GM12878 (cell line): ENCODE measurements at regions of chr10 and their contacts with region 1.

Region 1: GRCh38 chr10:27241652-27242472 is 1.3 kb upstream of the ACBD5 start:
- DNase-seq: peak; percentile 80
- ATAC-seq: peak; percentile 74
- H3K4me3 ChIP-seq: peak overlapping the region; percentile 93
- H3K27ac ChIP-seq: peak overlapping the region; percentile 95
- H3K4me1 ChIP-seq: peaks cover 4% of the 10 kb centered on the region; the same call in 1 of the 2 replicates
- H3K27me3 ChIP-seq: no peaks in the 10 kb centered on the region
- CTCF ChIP-seq: peak; percentile 17 to 40 (median 23); a peak in 5 of 6 replicates
- EP300 ChIP-seq: no peak
- POLR2A ChIP-seq: peak; percentile 90
- RAD21 ChIP-seq: no peak

Region 2: GRCh38 chr10:27252267-27253000 is 10.6 kb after region 1 on chr10:
- CTCF ChIA-PET with region 1: interaction called, 17 read pairs
- POLR2A ChIA-PET with region 1: interaction called, 5 read pairs
- RAD21 ChIA-PET with region 1: no interaction called
- SMC1A ChIA-PET with region 1: interaction called, 12 read pairs
- in situ Hi-C with region 1: no loop called
- intact Hi-C with region 1: no loop called
- DNase-seq: peak; percentile 27
- ATAC-seq: peak; percentile 100
- H3K4me3 ChIP-seq: peak overlapping the region; percentile 69
- H3K27ac ChIP-seq: peak overlapping the region; percentile 63
- H3K4me1 ChIP-seq: peaks cover 3% of the 10 kb centered on the region; the same call in 1 of the 2 replicates
- H3K27me3 ChIP-seq: no peaks in the 10 kb centered on the region
- CTCF ChIP-seq: peak; percentile 19 to 74 (median 46); a peak in 4 of 6 replicates
- EP300 ChIP-seq: no peak
- POLR2A ChIP-seq: peak; percentile 98
- RAD21 ChIP-seq: 0 out of 2 replicates have a peak, but pooled peaks have one; percentile 16

Region 3: GRCh38 chr10:27345455-27345920 is 103.6 kb after region 1 on chr10:
- CTCF ChIA-PET with region 1: no interaction called
- POLR2A ChIA-PET with region 1: interaction called, 3 read pairs
- RAD21 ChIA-PET with region 1: no interaction called
- SMC1A ChIA-PET with region 1: no interaction called
- in situ Hi-C with region 1: loop called (anchors 5 kb)
- intact Hi-C with region 1: loop called (anchors 5 kb)
- DNase-seq: peak; percentile 23
- ATAC-seq: peak; percentile 73
- H3K4me3 ChIP-seq: peak overlapping the region; percentile 43; the same call in 1 of the 2 replicates
- H3K27ac ChIP-seq: peak overlapping the region; percentile 14
- H3K4me1 ChIP-seq: peaks cover 9% of the 10 kb centered on the region
- H3K27me3 ChIP-seq: no peaks in the 10 kb centered on the region
- CTCF ChIP-seq: no peak
- EP300 ChIP-seq: no peak; a peak in 1 of 4 replicates
- POLR2A ChIP-seq: no peak
- RAD21 ChIP-seq: no peak

Region 4: DNA sequence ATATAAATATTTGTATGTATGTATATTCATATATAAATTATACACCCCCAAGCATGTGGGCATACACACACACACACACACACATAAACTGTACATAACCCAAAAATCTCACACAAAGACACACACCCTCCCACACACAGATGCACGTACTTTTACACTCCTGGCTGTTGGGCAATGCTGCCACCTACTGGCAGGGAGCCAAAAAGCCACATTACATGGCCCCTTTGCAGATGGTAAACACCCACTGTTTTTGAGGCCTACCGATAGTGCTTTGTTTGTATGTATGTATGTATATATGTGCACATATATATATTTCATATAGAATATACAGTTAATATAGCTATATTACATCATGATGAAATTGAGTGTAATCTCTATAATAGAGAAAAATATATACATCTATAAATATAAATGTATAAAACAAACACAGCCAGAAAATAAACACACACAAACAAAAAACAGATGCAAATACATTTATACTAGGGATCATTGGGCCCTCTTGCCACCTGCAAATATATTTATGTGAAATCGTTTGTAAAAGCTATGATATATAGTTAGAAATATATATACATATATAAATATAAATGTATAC is 118.8 kb after region 1 on chr10:
- CTCF ChIA-PET with region 1: interaction called, 4 read pairs
- POLR2A ChIA-PET with region 1: no interaction called
- RAD21 ChIA-PET with region 1: interaction called, 3 read pairs
- SMC1A ChIA-PET with region 1: interaction called, 3 read pairs
- in situ Hi-C with region 1: no loop called
- intact Hi-C with region 1: loop called (anchors 5 kb)
- DNase-seq: peak; percentile 62
- ATAC-seq: peak; percentile 98
- H3K4me3 ChIP-seq: no peak overlapping the region
- H3K27ac ChIP-seq: no peak overlapping the region
- H3K4me1 ChIP-seq: 0 out of 2 replicates have a peak, but pooled peaks cover 5% of the 10 kb centered on the region
- H3K27me3 ChIP-seq: no peaks in the 10 kb centered on the region
- CTCF ChIP-seq: peak; percentile 90 to 98 (median 95); a peak in 5 of 6 replicates
- EP300 ChIP-seq: no peak
- POLR2A ChIP-seq: no peak
- RAD21 ChIP-seq: peak; percentile 100

Region 5: DNA sequence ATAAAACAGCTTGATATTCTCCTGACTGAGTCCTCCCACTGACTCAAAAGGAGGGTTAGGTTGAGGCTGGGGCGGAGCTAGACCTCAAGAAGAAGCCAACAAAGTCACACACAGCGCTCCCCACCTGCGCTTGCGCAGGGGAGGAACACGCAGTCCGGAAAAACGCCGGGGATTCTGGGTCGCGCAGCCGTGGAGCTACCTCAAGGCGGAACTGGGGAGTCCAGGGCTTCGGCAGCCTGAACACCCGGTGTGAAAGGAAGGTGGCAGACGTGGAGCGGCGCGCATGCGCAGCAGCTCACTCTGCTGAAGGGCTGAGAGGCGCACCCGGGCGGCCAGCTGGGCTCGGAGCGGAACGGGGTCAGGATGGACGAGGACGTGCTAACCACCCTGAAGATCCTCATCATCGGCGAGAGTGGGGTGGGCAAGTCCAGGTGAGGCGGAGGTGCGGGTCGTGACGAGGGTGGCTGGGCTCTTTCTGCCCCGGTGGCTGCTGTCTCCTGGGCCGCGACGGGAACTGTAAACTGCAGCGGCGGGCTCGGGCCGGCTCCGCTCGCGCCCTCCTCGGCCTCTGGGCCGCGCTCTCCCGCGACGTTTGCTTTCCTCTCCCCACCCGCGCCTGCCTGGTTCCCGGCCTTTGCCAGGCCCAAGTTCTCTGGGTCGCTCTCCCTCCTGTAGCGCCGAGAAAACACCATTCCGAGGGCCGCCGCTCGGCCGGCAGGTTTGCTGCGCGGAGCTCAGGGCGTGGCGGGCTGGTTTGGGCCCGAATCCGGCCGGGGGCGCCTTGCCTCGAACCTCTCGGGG is 262.3 kb after region 1 on chr10 and contains the start of gene RAB18:
- CTCF ChIA-PET with region 1: no interaction called
- POLR2A ChIA-PET with region 1: interaction called, 8 read pairs
- RAD21 ChIA-PET with region 1: no interaction called
- SMC1A ChIA-PET with region 1: no interaction called
- in situ Hi-C with region 1: loop called (anchors 10 kb)
- intact Hi-C with region 1: loop called (anchors 5 kb)
- DNase-seq: peak; percentile 96
- ATAC-seq: peak; percentile 97
- H3K4me3 ChIP-seq: peak within 1 kb of the TSS; percentile 83
- H3K27ac ChIP-seq: peak within 1 kb of the TSS; percentile 74
- H3K4me1 ChIP-seq: peaks cover 3% of the 10 kb centered on the region; the same call in 1 of the 2 replicates
- H3K27me3 ChIP-seq: no peaks in the 10 kb centered on the region
- CTCF ChIP-seq: peak in 1 of 3 experiments; percentile 8; a peak in 1 of 6 replicates
- EP300 ChIP-seq: no peak
- POLR2A ChIP-seq: peak; percentile 99
- RAD21 ChIP-seq: no peak
- polyA plus RNA-seq, gene RAB18: 45.5 to 67.0 TPM

Region 6: GRCh38 chr10:28532383-28533175 is 1290.7 kb after region 1 on chr10 and contains the start of gene WAC:
- CTCF ChIA-PET with region 1: no interaction called
- POLR2A ChIA-PET with region 1: no interaction called
- RAD21 ChIA-PET with region 1: no interaction called
- SMC1A ChIA-PET with region 1: no interaction called
- in situ Hi-C with region 1: loop called (anchors 10 kb)
- intact Hi-C with region 1: loop called (anchors 5 kb)
- DNase-seq: peak; percentile 72
- ATAC-seq: peak; percentile 88
- H3K4me3 ChIP-seq: peak within 1 kb of the TSS; percentile 92
- H3K27ac ChIP-seq: peak within 1 kb of the TSS; percentile 100
- H3K4me1 ChIP-seq: peaks cover 4% of the 10 kb centered on the region
- H3K27me3 ChIP-seq: no peaks in the 10 kb centered on the region
- CTCF ChIP-seq: no peak
- EP300 ChIP-seq: 0 out of 4 replicates have a peak, but pooled peaks of 1 of the 2 experiments have one; percentile 16
- POLR2A ChIP-seq: peak; percentile 98
- RAD21 ChIP-seq: no peak
- polyA plus RNA-seq, gene WAC: 26.5 to 30.4 TPM